HepG2 (cell line): ENCODE measurements at regions of chr3 and their contacts with region 1.

Region 1: GRCh38 chr3:77038468-77038929 is 1.4 kb upstream of the ROBO2 start:
- DNase-seq: peak; percentile 68
- ATAC-seq: peak; percentile 99
- H3K4me3 ChIP-seq: no peak overlapping the region
- H3K27ac ChIP-seq: no peak overlapping the region
- H3K4me1 ChIP-seq: no peaks in the 10 kb centered on the region
- H3K27me3 ChIP-seq: peaks cover 4 to 27% of the 10 kb centered on the region in 2 experiments
- CTCF ChIP-seq: peak; percentile 78
- EP300 ChIP-seq: no peak
- POLR2A ChIP-seq: no peak
- RAD21 ChIP-seq: peak; percentile 63

Region 2: DNA sequence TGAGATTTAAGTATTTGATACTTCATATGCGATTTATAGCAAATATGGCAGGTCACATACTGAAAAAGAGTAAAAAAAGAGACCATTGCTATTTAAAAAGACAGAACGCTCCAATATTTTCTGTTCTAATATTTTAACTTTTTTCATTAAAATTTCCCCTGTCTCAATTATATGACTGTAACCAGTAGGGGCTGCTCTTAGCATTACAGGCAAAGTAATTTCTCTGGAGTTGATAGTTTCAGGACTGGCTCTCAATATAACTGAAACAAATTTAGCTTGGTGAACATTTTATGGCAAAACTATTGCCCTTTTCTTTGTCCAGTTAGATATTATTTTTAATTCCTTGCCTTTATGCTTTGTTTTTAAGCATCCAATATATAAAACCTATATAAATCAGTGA is 284.9 kb before region 1 on chr3:
- CTCF ChIA-PET with region 1: no interaction called
- POLR2A ChIA-PET with region 1: no interaction called
- in situ Hi-C with region 1: no loop called
- intact Hi-C with region 1: loop called (anchors 10 kb)
- DNase-seq: peak; percentile 2
- ATAC-seq: peak; percentile 44; the same call in 1 of the 3 replicates
- H3K4me3 ChIP-seq: no peak overlapping the region
- H3K27ac ChIP-seq: no peak overlapping the region
- H3K4me1 ChIP-seq: no peaks in the 10 kb centered on the region
- H3K27me3 ChIP-seq: no peaks in the 10 kb centered on the region
- CTCF ChIP-seq: peak; percentile 30; the same call in 1 of the 2 replicates
- EP300 ChIP-seq: no peak
- POLR2A ChIP-seq: no peak
- RAD21 ChIP-seq: no peak

Region 3: GRCh38 chr3:77254967-77255831 is 216.7 kb after region 1 on chr3:
- CTCF ChIA-PET with region 1: interaction called, 27 read pairs
- POLR2A ChIA-PET with region 1: no interaction called
- in situ Hi-C with region 1: loop called (anchors 5 kb)
- intact Hi-C with region 1: loop called (anchors 1 kb)
- DNase-seq: peak; percentile 54
- ATAC-seq: peak; percentile 90
- H3K4me3 ChIP-seq: no peak overlapping the region
- H3K27ac ChIP-seq: no peak overlapping the region
- H3K4me1 ChIP-seq: no peaks in the 10 kb centered on the region
- H3K27me3 ChIP-seq: no peaks in the 10 kb centered on the region; a peak in 1 of 5 replicates
- CTCF ChIP-seq: peak; percentile 78
- EP300 ChIP-seq: no peak
- POLR2A ChIP-seq: no peak
- RAD21 ChIP-seq: peak; percentile 56

Region 4: GRCh38 chr3:77815467-77815866 is 777.0 kb after region 1 on chr3:
- CTCF ChIA-PET with region 1: no interaction called
- POLR2A ChIA-PET with region 1: no interaction called
- in situ Hi-C with region 1: no loop called
- intact Hi-C with region 1: loop called (anchors 2 kb)
- DNase-seq: peak; percentile 1
- ATAC-seq: peak; percentile 70
- H3K4me3 ChIP-seq: no peak overlapping the region
- H3K27ac ChIP-seq: no peak overlapping the region
- H3K4me1 ChIP-seq: no peaks in the 10 kb centered on the region
- H3K27me3 ChIP-seq: no peaks in the 10 kb centered on the region
- CTCF ChIP-seq: peak; percentile 31; the same call in 1 of the 2 replicates
- EP300 ChIP-seq: no peak
- POLR2A ChIP-seq: no peak
- RAD21 ChIP-seq: no peak